MCF 10A (cell line): ENCODE measurements at regions of chr11 and their contacts with region 1.

Region 1: DNA sequence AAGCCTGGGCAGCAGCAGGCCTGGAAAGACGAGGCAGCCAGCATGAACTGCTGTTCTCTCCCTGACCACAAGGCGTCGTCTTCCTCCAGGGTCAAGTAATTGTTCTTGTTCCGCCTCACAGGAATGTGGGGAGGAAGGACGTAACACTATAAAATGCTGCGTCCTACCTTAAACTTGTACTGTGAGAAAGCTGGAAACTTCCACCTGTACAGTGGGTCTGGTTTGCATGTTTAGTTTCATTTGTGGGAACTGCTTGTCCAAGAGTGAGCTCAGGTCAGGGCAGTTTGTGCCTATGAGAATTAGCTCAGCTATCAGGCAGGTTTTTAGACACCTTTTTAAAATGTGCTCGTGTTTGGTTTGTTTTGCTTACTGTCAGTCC is 55.2 kb downstream of the PANX1 start:
- DNase-seq: peak; percentile 75
- H3K4me3 Mint-ChIP-seq: no peak overlapping the region
- H3K27ac Mint-ChIP-seq: no peak overlapping the region
- H3K4me1 Mint-ChIP-seq: peaks cover 7% of the 10 kb centered on the region
- H3K27me3 Mint-ChIP-seq: no peaks in the 10 kb centered on the region
- CTCF ChIP-seq: peak; percentile 91

Region 2: DNA sequence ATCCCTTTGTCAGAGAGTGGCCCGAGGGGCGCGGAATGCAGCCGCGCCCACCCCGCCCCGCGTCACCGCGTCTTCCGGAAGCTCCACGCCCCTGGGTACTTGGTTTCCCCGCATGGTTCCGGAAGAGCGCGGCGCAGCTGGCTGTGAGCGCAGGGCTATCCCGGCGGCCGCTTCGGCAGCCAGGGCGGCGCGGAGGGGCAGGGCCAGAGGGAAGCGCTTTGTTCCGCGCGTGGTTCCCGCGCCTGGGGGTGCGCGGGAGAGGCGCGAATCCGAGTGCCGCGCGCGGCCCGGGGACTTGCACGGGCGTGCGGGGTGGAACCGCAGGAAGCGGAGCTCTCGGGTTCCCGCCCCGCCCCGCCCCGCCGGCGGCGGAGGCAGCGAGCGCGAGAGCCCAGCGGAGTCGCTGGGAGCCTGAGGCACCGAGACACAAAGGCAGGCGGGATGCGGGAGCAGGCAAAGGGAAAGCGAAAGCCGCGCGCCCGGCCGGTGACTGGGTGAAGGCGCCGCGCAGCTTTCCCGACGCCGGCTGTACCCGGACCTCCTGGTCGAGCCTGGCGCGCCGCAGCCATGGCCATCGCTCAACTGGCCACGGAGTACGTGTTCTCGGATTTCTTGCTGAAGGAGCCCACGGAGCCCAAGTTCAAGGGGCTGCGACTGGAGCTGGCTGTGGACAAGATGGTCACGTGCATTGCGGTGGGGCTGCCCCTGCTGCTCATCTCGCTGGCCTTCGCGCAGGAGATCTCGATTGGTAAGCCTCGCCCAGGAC is 54.9 kb before region 1 on chr11 and contains the start of gene PANX1:
- CTCF ChIA-PET with region 1: interaction called, 28 read pairs
- POLR2A ChIA-PET with region 1: interaction called, 4 read pairs
- intact Hi-C with region 1: loop called (anchors 5 kb)
- DNase-seq: peak; percentile 82
- H3K4me3 Mint-ChIP-seq: no peak within 1 kb of the TSS
- H3K27ac Mint-ChIP-seq: no peak within 1 kb of the TSS
- H3K4me1 Mint-ChIP-seq: peaks cover 16% of the 10 kb centered on the region
- H3K27me3 Mint-ChIP-seq: no peaks in the 10 kb centered on the region
- CTCF ChIP-seq: no peak
- total RNA-seq, gene PANX1: 26.1 and 30.1 TPM in 2 replicates

Region 3: GRCh38 chr11:94171693-94172440 is 12.0 kb before region 1 on chr11:
- CTCF ChIA-PET with region 1: interaction called, 100 read pairs
- POLR2A ChIA-PET with region 1: interaction called, 4 read pairs
- intact Hi-C with region 1: no loop called
- DNase-seq: peak; percentile 65
- H3K4me3 Mint-ChIP-seq: no peak overlapping the region
- H3K27ac Mint-ChIP-seq: no peak overlapping the region
- H3K4me1 Mint-ChIP-seq: peaks cover 12% of the 10 kb centered on the region
- H3K27me3 Mint-ChIP-seq: no peaks in the 10 kb centered on the region
- CTCF ChIP-seq: peak; percentile 79

Region 4: DNA sequence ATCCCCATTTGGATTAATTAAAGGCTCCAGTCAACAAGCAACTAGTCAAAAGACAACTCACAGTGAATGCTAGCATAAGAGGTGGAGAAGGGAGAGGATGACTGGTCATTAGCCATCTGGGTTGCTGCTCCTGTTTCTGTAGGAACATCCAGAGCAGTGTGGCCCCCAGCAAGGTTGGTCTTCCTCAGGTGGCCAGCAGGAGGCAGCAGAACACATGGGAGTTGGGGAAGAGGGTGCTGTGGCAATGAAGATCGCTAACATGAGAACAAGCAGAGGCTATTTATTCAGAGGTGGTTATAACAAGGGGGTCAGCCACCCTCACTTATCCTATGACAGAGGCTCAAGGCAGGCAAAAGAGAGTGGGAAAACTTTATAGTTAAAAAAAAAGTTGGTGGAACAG is 141.8 kb after region 1 on chr11:
- CTCF ChIA-PET with region 1: no interaction called
- POLR2A ChIA-PET with region 1: no interaction called
- intact Hi-C with region 1: loop called (anchors 10 kb)
- DNase-seq: peak; percentile 67
- H3K4me3 Mint-ChIP-seq: no peak overlapping the region
- H3K27ac Mint-ChIP-seq: no peak overlapping the region
- H3K4me1 Mint-ChIP-seq: peaks cover 3% of the 10 kb centered on the region
- H3K27me3 Mint-ChIP-seq: peaks cover 20% of the 10 kb centered on the region
- CTCF ChIP-seq: peak; percentile 54

Region 5: DNA sequence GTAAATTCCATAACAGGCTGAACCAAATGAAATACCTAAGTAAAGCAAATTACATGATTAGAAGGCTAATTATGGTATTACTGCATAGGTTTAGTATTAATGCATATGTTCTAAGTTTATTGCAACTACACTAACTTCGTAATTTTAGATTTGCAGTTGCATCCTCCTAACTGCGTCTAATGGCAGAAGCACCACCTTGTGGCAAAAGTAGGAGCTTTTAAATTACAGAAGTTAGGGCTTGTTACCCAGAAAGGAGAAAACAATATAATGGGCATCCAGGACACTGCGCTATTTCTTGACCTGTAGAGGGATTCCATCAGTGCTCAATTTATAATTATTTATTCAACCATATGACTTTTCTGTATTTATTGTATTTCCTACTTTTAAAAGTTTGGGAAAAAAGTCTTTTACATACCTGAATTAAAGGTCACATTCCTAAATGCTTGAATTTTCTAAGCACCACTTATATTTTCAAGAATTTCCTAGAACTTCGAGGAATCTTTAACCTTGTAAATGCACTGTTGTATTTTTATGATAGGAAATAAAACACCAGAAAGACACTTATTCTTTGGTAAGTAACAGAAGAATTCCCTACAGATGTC is 233.6 kb after region 1 on chr11:
- CTCF ChIA-PET with region 1: interaction called, 110 read pairs
- POLR2A ChIA-PET with region 1: no interaction called
- intact Hi-C with region 1: loop called (anchors 1 kb)
- DNase-seq: peak; percentile 44
- H3K4me3 Mint-ChIP-seq: no peak overlapping the region
- H3K27ac Mint-ChIP-seq: no peak overlapping the region
- H3K4me1 Mint-ChIP-seq: no peaks in the 10 kb centered on the region
- H3K27me3 Mint-ChIP-seq: no peaks in the 10 kb centered on the region
- CTCF ChIP-seq: peak; percentile 47

Region 6: DNA sequence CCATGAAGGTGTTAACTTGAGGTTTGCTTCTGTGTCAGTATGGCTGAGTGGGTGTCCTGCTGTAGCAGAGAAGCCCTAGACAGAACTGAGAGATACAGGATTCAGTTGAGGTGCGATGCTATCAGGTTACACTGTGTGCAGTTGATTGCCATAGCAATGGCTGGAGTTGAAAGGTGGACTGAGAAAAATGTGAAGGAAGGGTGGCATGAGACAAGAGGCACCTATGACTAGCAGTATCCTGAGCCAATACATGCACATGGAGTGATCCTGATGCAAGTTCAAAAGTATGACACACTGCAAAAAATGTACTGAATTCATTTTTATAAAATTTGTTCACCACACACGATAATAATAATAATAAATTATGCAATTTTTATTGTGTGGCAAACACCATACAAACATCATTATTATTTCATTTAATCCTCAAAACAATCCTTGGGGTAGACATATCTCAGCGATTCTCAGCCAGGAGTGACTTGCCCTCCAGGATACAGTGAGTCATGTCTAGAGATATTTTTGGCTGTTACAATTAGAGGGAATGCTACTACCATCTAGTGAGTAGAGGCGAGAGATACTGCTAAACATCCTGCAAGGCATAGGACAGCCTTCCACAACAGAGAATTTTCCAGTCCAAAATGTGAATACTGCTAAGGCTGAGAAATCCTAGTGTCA is 379.4 kb after region 1 on chr11:
- CTCF ChIA-PET with region 1: interaction called, 3 read pairs
- POLR2A ChIA-PET with region 1: no interaction called
- intact Hi-C with region 1: loop called (anchors 5 kb)
- DNase-seq: peak; percentile 68
- H3K4me3 Mint-ChIP-seq: no peak overlapping the region
- H3K27ac Mint-ChIP-seq: no peak overlapping the region
- H3K4me1 Mint-ChIP-seq: peaks cover 7% of the 10 kb centered on the region
- H3K27me3 Mint-ChIP-seq: no peaks in the 10 kb centered on the region
- CTCF ChIP-seq: peak; percentile 50